ENCODE measurements at regions of chr12 and their contacts with region 1.

Region 1: GRCh38 chr12:6851921-6852650 is at the start of gene USP5:
- DNase-seq: peak; percentile 99
- ATAC-seq: peak; percentile 79
- H3K4me3 Mint-ChIP-seq: peak within 1 kb of the TSS; percentile 86
- H3K27ac Mint-ChIP-seq: peak within 1 kb of the TSS; percentile 98
- H3K4me1 Mint-ChIP-seq: peaks cover 29% of the 10 kb centered on the region
- H3K27me3 Mint-ChIP-seq: no peaks in the 10 kb centered on the region
- CTCF ChIP-seq: no peak
- total RNA-seq, gene USP5: 109 to 112 TPM

Region 2: GRCh38 chr12:6833189-6833890 is 18.7 kb before region 1 on chr12:
- CTCF ChIA-PET with region 1: interaction called, 80 read pairs
- POLR2A ChIA-PET with region 1: interaction called, 8 read pairs
- intact Hi-C with region 1: no loop called
- DNase-seq: no peak
- ATAC-seq: no peak
- H3K4me3 Mint-ChIP-seq: no peak overlapping the region
- H3K27ac Mint-ChIP-seq: no peak overlapping the region
- H3K4me1 Mint-ChIP-seq: peaks cover 20% of the 10 kb centered on the region
- H3K27me3 Mint-ChIP-seq: peaks cover 18% of the 10 kb centered on the region
- CTCF ChIP-seq: no peak

Region 3: GRCh38 chr12:6839482-6840201 is 12.4 kb before region 1 on chr12:
- CTCF ChIA-PET with region 1: interaction called, 80 read pairs
- POLR2A ChIA-PET with region 1: interaction called, 10 read pairs
- intact Hi-C with region 1: no loop called
- DNase-seq: no peak
- ATAC-seq: no peak
- H3K4me3 Mint-ChIP-seq: no peak overlapping the region
- H3K27ac Mint-ChIP-seq: no peak overlapping the region
- H3K4me1 Mint-ChIP-seq: peaks cover 5% of the 10 kb centered on the region
- H3K27me3 Mint-ChIP-seq: no peaks in the 10 kb centered on the region
- CTCF ChIP-seq: no peak

Measured in activated CD8-positive, alpha-beta T cell treated with anti-CD3 and anti-CD28 coated beads for 36 hours (primary cell).